OCI-LY7 (cell line): ENCODE measurements at regions of chr10 and their contacts with region 1.

Region 1: GRCh38 chr10:100962351-100963080 is 6.8 kb upstream of the SEMA4G start:
- DNase-seq: no peak
- H3K4me3 ChIP-seq: no peak overlapping the region
- H3K27ac ChIP-seq: no peak overlapping the region
- H3K4me1 ChIP-seq: peaks cover 11% of the 10 kb centered on the region
- CTCF ChIP-seq: no peak

Region 2: DNA sequence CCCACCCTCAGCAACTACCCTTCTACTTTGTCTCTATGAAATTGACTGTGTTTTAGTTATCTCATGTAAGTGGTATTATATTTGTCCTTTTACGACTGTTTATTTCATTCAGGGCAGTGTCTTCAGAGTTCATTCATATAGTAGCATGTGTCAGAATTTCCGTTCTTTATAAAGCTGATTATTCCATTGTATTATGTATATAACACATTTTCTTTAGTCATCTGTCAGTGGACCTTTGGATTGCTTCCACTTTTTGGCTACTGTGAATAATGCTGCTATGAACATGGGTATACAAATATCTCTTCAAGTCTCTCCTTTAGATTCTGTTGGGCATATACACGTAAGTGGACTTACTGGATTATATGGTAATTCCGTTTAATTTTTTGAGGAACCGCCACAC is 35.2 kb before region 1 on chr10:
- CTCF ChIA-PET with region 1: no interaction called
- POLR2A ChIA-PET with region 1: interaction called, 3 read pairs
- intact Hi-C with region 1: loop called (anchors 5 kb)
- DNase-seq: no peak
- H3K4me3 ChIP-seq: no peak overlapping the region
- H3K27ac ChIP-seq: no peak overlapping the region
- H3K4me1 ChIP-seq: no peaks in the 10 kb centered on the region
- CTCF ChIP-seq: no peak